A673 (cell line): ENCODE measurements at regions of chr4 and their contacts with region 1.

Region 1: GRCh38 chr4:150217192-150217591 is 138.9 kb downstream of the DCLK2 start:
- DNase-seq: peak; percentile 77
- H3K4me3 ChIP-seq: no peak overlapping the region
- H3K27ac ChIP-seq: no peak overlapping the region
- H3K4me1 ChIP-seq: peaks cover 18% of the 10 kb centered on the region
- H3K27me3 ChIP-seq: no peaks in the 10 kb centered on the region
- CTCF ChIP-seq: peak; percentile 64

Region 2: DNA sequence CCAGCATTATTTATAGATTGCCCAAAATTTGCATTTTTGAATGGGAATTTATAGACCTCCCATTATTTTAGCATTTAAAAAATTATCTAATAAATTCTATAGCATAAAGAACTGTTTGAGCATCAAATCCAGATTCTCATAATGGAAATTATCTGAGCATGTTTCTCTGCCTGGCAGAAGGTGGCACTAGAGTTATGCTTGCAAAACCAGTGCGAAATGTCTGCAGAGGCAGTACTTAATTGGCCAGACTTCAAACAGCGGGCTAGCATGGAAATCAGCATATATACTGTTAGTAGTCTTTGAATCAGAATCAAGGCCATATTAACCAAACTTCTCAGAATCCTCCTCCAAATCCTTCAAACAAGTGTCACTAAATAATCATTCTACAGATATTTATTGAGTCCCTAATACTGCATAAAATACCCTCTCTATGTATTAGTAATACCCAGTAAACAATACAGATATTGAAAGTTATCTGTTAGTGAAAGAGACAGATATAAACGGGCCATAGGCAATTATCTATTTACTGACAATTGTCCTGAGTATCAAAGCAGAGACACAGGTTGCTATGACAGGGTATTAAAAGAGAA is 217.6 kb before region 1 on chr4:
- CTCF ChIA-PET with region 1: no interaction called
- POLR2A ChIA-PET with region 1: no interaction called
- intact Hi-C with region 1: loop called (anchors 5 kb)
- DNase-seq: peak; percentile 86
- H3K4me3 ChIP-seq: no peak overlapping the region
- H3K27ac ChIP-seq: no peak overlapping the region
- H3K4me1 ChIP-seq: peaks cover 17% of the 10 kb centered on the region
- H3K27me3 ChIP-seq: no peaks in the 10 kb centered on the region
- CTCF ChIP-seq: peak; percentile 84

Region 3: GRCh38 chr4:150010525-150011126 is 206.6 kb before region 1 on chr4:
- CTCF ChIA-PET with region 1: interaction called, 5 read pairs
- POLR2A ChIA-PET with region 1: no interaction called
- intact Hi-C with region 1: loop called (anchors 2 kb)
- DNase-seq: peak; percentile 76
- H3K4me3 ChIP-seq: no peak overlapping the region
- H3K27ac ChIP-seq: no peak overlapping the region
- H3K4me1 ChIP-seq: peaks cover 12% of the 10 kb centered on the region
- H3K27me3 ChIP-seq: no peaks in the 10 kb centered on the region
- CTCF ChIP-seq: peak; percentile 59

Region 4: DNA sequence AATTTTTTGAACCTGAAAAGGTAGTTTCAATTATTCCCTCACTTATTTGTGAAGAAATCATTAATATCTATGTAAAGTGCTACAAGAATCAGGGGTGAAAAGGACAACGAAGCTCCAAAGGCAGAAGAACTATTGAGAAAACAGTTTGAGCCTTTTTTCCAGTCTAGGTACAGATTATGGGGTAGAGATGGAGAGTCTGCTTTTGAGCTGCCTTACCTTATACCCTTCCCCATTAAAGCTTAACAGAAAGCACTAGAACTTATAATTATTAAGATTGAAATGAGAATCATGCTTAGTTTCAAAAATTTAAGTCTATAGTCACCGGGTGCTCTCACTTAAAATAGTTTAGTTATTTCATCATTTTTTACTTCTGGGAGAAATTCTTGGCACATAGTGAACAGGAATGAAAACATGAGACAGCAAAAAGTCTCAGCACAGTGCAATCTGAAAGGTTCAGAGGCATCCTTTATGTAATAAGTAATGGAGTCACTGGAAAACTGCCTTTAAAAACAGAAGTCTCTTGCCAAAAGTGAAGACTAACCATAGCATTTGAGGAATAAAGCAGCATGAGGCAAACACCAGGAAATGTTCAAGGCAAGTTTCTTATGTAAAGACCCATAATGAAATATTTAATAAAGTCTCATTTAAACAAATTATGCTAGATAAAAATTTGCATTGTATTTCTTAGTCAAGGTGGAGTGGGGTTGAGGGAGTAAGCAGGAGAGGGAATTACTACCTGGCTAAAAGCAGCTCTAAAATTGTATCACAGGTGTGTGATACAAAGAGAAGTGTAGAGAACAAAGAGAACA is 144.1 kb before region 1 on chr4:
- CTCF ChIA-PET with region 1: no interaction called
- POLR2A ChIA-PET with region 1: no interaction called
- intact Hi-C with region 1: no loop called
- DNase-seq: no peak
- H3K4me3 ChIP-seq: no peak overlapping the region
- H3K27ac ChIP-seq: no peak overlapping the region
- H3K4me1 ChIP-seq: peaks cover 5% of the 10 kb centered on the region
- H3K27me3 ChIP-seq: no peaks in the 10 kb centered on the region
- CTCF ChIP-seq: no peak

Region 5: GRCh38 chr4:150108691-150109090 is 108.5 kb before region 1 on chr4:
- CTCF ChIA-PET with region 1: no interaction called
- POLR2A ChIA-PET with region 1: no interaction called
- intact Hi-C with region 1: loop called (anchors 10 kb)
- DNase-seq: no peak
- H3K4me3 ChIP-seq: no peak overlapping the region
- H3K27ac ChIP-seq: no peak overlapping the region
- H3K4me1 ChIP-seq: no peaks in the 10 kb centered on the region
- H3K27me3 ChIP-seq: no peaks in the 10 kb centered on the region
- CTCF ChIP-seq: no peak